AG04450 (cell line): ENCODE measurements at regions of chr7 and their contacts with region 1.

Region 1: DNA sequence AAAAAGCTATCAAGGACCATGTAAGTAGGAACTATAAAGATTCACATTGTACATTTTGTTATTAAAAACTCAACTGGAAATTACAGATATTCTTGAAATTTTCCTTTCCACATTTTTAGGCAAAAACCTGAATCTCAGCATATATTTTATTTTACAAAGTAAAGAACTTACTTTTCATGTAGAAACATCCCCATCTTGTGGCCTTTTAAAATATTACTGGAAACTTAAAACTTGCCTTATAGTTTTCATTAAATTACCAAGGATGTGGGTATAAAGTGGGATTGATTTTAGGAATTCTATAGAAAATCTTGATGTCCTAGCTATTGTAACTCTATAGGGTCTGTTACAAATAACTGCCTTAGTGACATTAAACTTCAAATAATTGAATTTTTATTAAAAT is 10.6 kb downstream of the DBF4 start:
- DNase-seq: peak; percentile 11
- H3K4me3 ChIP-seq: no peak overlapping the region
- H3K27ac ChIP-seq: no peak overlapping the region
- H3K27me3 ChIP-seq: no peaks in the 10 kb centered on the region
- CTCF ChIP-seq: peak; percentile 47

Region 2: GRCh38 chr7:87416682-87417587 is 469.9 kb before region 1 on chr7:
- CTCF ChIA-PET with region 1: interaction called, 15 read pairs
- POLR2A ChIA-PET with region 1: no interaction called
- DNase-seq: peak; percentile 21
- H3K4me3 ChIP-seq: no peak overlapping the region
- H3K27ac ChIP-seq: no peak overlapping the region
- H3K27me3 ChIP-seq: no peaks in the 10 kb centered on the region
- CTCF ChIP-seq: peak; percentile 69

Region 3: DNA sequence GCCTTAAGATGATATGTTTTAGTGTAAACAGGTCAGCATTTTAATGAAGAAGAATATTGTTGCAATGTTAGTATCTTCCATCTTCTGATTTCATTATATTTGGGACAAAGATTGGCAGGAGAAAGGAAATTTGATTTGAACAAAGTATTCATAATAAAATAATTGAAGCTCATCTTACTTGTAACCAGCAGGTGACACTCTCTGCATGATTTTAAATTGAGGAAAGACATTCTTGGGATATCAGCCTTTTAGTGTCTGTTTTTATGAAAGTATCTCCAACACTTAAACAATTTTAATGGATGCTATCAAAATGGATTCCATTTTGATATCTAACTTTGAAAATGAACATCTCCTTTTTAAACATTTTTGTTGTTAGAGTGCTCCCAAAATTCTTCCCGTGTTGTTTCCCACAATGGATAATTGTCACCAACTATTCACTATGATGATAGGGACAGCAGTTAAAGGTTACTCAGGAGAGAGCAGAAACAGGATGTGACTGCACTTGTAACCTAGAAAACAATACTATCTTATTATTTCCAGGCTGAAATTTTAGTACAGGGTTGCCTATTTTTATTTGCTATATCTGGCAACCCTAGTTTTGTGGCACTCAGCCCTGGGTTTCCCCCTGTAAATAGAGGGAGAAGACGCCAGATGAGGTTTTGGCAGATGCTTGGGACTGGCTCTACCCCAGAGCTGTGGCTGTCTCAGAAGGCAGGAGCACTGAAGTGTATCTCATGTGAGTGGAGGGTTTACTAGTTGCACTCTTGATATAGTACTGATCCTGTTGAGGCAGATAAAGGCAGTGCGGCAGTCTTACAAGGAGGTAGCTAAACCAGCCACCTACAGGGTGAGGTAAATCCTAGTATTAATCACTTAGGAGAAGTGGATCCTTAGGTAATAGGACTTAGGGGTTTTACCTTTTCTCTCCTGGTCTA is 380.4 kb before region 1 on chr7:
- CTCF ChIA-PET with region 1: interaction called, 66 read pairs
- POLR2A ChIA-PET with region 1: no interaction called
- DNase-seq: peak; percentile 15
- H3K4me3 ChIP-seq: no peak overlapping the region
- H3K27ac ChIP-seq: no peak overlapping the region
- H3K27me3 ChIP-seq: no peaks in the 10 kb centered on the region
- CTCF ChIP-seq: peak; percentile 54

Region 4: DNA sequence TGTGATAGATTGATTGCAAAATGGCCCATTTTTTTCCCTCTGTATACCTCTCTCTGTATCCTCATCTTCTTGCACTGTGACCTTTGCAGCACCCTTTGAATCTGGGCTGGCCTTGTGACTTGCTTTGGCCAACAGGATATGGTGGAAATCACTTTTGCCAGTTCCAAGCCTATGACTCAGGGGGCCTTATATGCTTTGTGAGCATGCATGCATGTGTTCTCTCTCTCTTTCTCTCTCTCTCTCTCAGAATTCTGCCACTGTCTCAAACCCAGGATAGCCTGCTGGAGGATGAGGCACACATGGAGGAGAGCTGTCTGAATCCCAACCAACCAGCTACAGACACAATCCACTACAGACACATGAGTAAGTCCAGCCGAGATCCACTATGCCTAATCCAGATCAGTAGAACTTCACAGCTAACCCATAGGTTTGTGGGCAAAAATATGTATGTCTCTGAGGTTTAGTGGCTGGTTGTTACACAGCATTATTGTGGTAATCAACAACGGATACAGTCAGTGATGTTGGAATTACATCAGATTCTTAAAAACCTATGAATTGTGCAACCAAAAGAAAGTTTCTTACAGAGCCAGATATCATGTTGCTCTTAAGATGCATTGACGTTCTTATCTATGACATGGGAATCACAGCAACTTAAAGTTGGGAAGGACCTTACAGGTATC is 369.6 kb before region 1 on chr7:
- CTCF ChIA-PET with region 1: no interaction called
- POLR2A ChIA-PET with region 1: interaction called, 14 read pairs
- DNase-seq: no peak
- H3K4me3 ChIP-seq: no peak overlapping the region
- H3K27ac ChIP-seq: no peak overlapping the region
- H3K27me3 ChIP-seq: no peaks in the 10 kb centered on the region
- CTCF ChIP-seq: no peak

Region 5: GRCh38 chr7:87797798-87798403 is 89.0 kb before region 1 on chr7:
- CTCF ChIA-PET with region 1: interaction called, 58 read pairs
- POLR2A ChIA-PET with region 1: no interaction called
- DNase-seq: peak; percentile 7
- H3K4me3 ChIP-seq: no peak overlapping the region
- H3K27ac ChIP-seq: no peak overlapping the region
- H3K27me3 ChIP-seq: no peaks in the 10 kb centered on the region
- CTCF ChIP-seq: peak; percentile 63

Region 6: GRCh38 chr7:87944531-87944930 is 57.7 kb after region 1 on chr7:
- CTCF ChIA-PET with region 1: no interaction called
- POLR2A ChIA-PET with region 1: interaction called, 10 read pairs
- DNase-seq: no peak
- H3K4me3 ChIP-seq: no peak overlapping the region
- H3K27ac ChIP-seq: no peak overlapping the region
- H3K27me3 ChIP-seq: peaks cover 3% of the 10 kb centered on the region
- CTCF ChIP-seq: no peak

Region 7: DNA sequence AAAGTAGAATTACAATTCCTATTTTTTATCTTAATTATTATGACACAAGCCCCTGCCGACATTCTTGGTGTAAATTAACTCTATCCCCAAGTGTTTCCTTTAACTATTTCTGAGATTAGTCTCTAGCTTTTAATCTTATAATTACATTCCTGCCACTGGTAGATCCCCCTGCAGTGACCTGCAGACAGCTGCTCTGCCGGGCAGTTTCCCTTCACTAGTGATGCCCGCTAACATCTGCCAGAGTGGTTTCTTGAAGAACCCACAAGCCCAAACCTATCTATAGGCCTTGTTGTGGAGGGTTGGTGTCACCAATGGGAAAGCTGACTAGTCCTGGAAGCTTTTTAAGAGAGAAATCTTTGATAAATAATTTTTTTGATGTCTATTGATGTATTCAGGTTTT is 97.2 kb after region 1 on chr7:
- CTCF ChIA-PET with region 1: no interaction called
- POLR2A ChIA-PET with region 1: no interaction called
- DNase-seq: no peak
- H3K4me3 ChIP-seq: no peak overlapping the region
- H3K27ac ChIP-seq: no peak overlapping the region
- H3K27me3 ChIP-seq: no peaks in the 10 kb centered on the region
- CTCF ChIP-seq: no peak